ENCODE measurements at regions of chr2 and their contacts with region 1.

Region 1: GRCh38 chr2:88739985-88740600 is 48.6 kb downstream of the RPIA start:
- DNase-seq: peak; percentile 52 to 76
- ATAC-seq: peak in 7 of 8 donors; percentile 56 to 73 (median 70)
- H3K4me3 ChIP-seq: no peak overlapping the region
- H3K27ac ChIP-seq: peak overlapping the region in 5 of 10 donors; percentile 20 to 87 (median 74)
- H3K4me1 ChIP-seq: peaks cover 8 to 50% (median 34%) of the 10 kb centered on the region in 9 donors
- H3K27me3 ChIP-seq: no peaks in the 10 kb centered on the region
- CTCF ChIP-seq: peak; percentile 88 to 96 (median 93)

Region 2: GRCh38 chr2:88691339-88692183 is 48.5 kb before region 1 on chr2 and contains the start of gene RPIA:
- intact Hi-C with region 1: loop called in 2 of 10 experiments (anchors 5 kb)
- DNase-seq: peak; percentile 98 to 100
- ATAC-seq: peak; percentile 99 to 100 (median 99)
- H3K4me3 ChIP-seq: peak within 1 kb of the TSS; percentile 57 to 94 (median 80)
- H3K27ac ChIP-seq: peak within 1 kb of the TSS in 9 of 10 donors; percentile 63 to 92 (median 81)
- H3K4me1 ChIP-seq: peaks cover 0 to 45% (median 30%) of the 10 kb centered on the region in 9 donors
- H3K27me3 ChIP-seq: no peaks in the 10 kb centered on the region
- CTCF ChIP-seq: peak; percentile 54 to 89 (median 82)
- total RNA-seq, gene RPIA: 9.1 to 18.7 (median 13.5) TPM

Region 3: GRCh38 chr2:88831792-88832248 is 91.7 kb after region 1 on chr2:
- intact Hi-C with region 1: loop called in 3 of 10 experiments (anchors 5 kb)
- DNase-seq: peak; percentile 38 to 51
- ATAC-seq: no peak
- H3K4me3 ChIP-seq: no peak overlapping the region
- H3K27ac ChIP-seq: no peak overlapping the region
- H3K4me1 ChIP-seq: peaks cover 0 to 26% (median 8%) of the 10 kb centered on the region in 9 donors
- H3K27me3 ChIP-seq: no peaks in the 10 kb centered on the region
- CTCF ChIP-seq: peak in 8 of 9 donors; percentile 33 to 81 (median 62)

Region 4: DNA sequence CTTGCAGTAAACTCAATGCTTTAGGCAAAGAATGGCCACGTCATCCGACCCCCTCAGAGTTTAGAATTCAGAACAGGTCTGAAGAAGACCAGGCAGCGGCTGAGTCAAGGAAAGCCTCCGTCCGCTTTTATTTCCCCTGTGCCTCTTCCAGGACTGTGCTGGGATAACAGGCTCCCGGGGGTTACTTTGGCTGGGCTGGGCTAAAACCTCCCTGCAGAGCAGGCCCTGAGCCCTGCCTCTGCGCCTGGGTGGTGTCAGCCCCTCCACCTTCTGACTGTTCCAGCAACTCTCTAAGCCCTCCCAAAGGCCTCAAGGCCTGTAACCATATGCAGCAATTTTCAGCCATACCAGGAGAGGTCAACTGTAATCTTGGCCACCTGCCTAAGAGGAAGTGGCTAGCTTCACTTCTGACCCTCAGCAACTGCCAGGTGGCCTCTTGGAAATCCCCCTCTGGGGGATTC is 117.9 kb after region 1 on chr2:
- intact Hi-C with region 1: loop called in 1 of 10 experiments (anchors 10 kb)
- DNase-seq: peak in 1 of 2 donors; percentile 26
- ATAC-seq: peak in 7 of 8 donors; percentile 33 to 80 (median 52)
- H3K4me3 ChIP-seq: no peak overlapping the region
- H3K27ac ChIP-seq: peak overlapping the region in 3 of 10 donors; percentile 41 to 54 (median 47)
- H3K4me1 ChIP-seq: peaks cover 0 to 13% (median 10%) of the 10 kb centered on the region in 9 donors
- H3K27me3 ChIP-seq: peaks cover 0 to 3% (median 0%) of the 10 kb centered on the region in 7 donors
- CTCF ChIP-seq: no peak

Region 5: DNA sequence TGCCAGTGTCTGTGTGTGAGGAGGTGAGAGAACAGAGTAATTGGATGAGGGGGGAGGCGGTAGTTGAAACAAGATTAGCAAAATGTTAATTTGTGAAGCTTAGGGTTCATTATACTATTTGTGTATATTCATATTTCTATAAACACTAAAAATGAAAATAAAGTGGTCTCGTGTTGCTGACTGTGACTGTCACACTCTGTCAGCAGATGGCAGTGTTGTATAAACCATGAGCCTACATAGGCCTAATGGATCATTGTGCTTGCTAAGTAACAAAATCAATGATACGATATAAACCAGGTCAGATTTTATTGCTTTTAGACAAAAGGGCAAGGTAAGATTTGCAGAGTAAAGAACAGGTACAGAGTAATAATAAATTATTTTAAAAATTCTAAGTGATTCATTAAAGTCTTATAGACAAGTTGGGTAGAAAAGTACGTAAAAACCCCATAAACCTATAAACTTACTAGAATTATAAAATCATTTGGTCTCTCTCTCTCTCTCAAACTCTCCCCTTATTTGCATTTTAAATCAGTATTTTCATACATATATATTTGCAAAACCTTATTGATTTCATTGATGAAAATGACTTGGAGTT is 134.1 kb after region 1 on chr2:
- intact Hi-C with region 1: loop called in 4 of 10 experiments (anchors 5 to 10 kb)
- DNase-seq: peak in 1 of 2 donors; percentile 47
- ATAC-seq: peak in 6 of 8 donors; percentile 53 to 73 (median 62)
- H3K4me3 ChIP-seq: no peak overlapping the region
- H3K27ac ChIP-seq: no peak overlapping the region
- H3K4me1 ChIP-seq: peaks cover 0 to 3% (median 0%) of the 10 kb centered on the region in 9 donors
- H3K27me3 ChIP-seq: peaks cover 0 to 33% (median 13%) of the 10 kb centered on the region in 7 donors
- CTCF ChIP-seq: peak; percentile 59 to 88 (median 80)

Region 6: GRCh38 chr2:88919087-88919738 is 179.1 kb after region 1 on chr2:
- intact Hi-C with region 1: loop called in 1 of 10 experiments (anchors 5 kb)
- DNase-seq: no peak
- ATAC-seq: no peak
- H3K4me3 ChIP-seq: no peak overlapping the region
- H3K27ac ChIP-seq: no peak overlapping the region
- H3K4me1 ChIP-seq: no peaks in the 10 kb centered on the region
- H3K27me3 ChIP-seq: peaks cover 0 to 4% (median 0%) of the 10 kb centered on the region in 7 donors
- CTCF ChIP-seq: peak in 8 of 9 donors; percentile 18 to 71 (median 60)

Measured in heart right ventricle (tissue), 16 donors.